Activated CD4-positive, alpha-beta T cell treated with anti-CD3 and anti-CD28 coated beads for 36 hours (primary cell): ENCODE measurements at regions of chr11 and their contacts with region 1.

Region 1: DNA sequence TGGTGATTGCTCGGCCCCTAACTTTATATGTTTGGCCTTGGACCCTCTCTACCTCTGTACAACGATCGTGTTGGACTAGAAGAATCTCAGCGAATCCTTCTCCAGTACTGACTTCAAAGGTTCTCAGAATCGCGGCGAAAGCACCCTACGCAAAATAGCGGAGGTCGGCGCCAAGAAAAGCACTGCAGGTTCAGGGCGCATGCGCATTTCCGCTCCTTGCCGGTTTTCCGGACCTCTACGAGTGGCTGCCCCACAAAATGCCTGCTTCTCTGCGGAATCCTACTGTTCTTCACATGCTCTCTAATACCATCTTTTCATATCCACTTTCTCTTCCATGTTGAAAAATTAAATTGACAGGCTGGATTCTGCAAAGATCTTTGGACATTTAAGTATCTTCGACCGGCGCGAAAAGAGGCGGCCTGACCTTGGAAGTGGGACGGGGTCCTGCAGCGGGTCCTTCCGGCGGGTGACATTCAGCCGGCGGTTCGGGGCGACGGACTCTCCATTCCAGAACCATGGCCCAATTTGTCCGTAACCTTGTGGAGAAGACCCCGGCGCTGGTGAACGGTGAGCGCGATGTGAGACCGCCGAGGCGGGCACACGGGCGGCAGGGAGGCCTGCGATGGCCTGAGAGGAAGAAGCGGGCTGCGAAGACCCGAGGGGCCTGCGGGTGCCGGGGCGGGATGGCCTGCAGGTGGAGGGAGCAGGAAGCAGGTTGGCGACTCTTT is at the start of gene ATP5MG:
- DNase-seq: peak; percentile 96
- ATAC-seq: peak; percentile 63
- H3K4me3 Mint-ChIP-seq: peak within 1 kb of the TSS; percentile 93
- H3K27ac Mint-ChIP-seq: peak within 1 kb of the TSS; percentile 100
- H3K4me1 Mint-ChIP-seq: peaks cover 64% of the 10 kb centered on the region
- H3K27me3 Mint-ChIP-seq: no peaks in the 10 kb centered on the region
- total RNA-seq, gene ATP5MG: 136 to 229 TPM

Region 2: DNA sequence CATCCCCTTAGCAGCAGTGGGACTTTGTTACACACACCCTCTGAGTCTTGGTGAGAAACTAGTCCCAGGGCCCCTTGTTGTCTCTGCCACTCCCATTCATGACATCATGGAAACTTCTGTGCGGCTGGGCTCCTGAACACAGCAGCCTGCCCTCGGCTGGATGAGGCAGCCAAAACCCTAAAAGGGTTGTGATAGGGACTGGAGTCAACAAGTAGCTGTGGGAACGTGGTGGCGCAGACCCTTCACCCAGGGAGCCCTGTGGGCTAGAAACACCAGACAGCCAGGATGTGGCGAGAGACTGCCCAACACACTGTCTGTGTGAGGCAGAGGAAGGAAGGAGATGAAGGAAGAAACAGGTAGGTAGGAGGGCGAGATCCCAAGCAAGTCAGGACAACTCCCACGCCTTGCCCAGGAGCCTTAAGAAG is 62.7 kb before region 1 on chr11:
- CTCF ChIA-PET with region 1: interaction called, 3 read pairs
- POLR2A ChIA-PET with region 1: interaction called, 3 read pairs
- intact Hi-C with region 1: loop called (anchors 2 kb)
- DNase-seq: peak; percentile 94
- ATAC-seq: peak; percentile 63
- H3K4me3 Mint-ChIP-seq: peak overlapping the region; percentile 83
- H3K27ac Mint-ChIP-seq: peak overlapping the region; percentile 100
- H3K4me1 Mint-ChIP-seq: peaks cover 45% of the 10 kb centered on the region
- H3K27me3 Mint-ChIP-seq: no peaks in the 10 kb centered on the region

Region 3: DNA sequence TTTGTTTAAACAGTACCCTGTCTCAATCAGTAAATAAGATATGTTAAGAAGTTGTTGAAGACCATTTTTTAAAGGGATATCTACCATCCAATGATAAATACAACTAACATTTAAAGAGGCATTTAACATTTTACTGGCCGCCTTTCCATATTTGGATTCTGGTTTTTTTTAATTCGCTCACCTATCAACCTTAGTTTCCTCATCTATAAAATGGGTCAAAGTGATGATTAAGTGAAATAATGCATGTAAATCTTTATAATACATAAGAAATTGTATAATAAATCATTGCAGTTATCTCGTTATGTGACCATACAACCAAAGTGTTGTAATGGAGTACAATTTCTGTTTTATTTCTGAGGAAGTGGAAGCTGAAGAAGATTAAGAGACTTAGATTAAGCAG is 17.7 kb before region 1 on chr11:
- CTCF ChIA-PET with region 1: interaction called, 14 read pairs
- POLR2A ChIA-PET with region 1: no interaction called
- intact Hi-C with region 1: no loop called
- DNase-seq: no peak
- ATAC-seq: no peak
- H3K4me3 Mint-ChIP-seq: no peak overlapping the region
- H3K27ac Mint-ChIP-seq: no peak overlapping the region
- H3K4me1 Mint-ChIP-seq: no peaks in the 10 kb centered on the region
- H3K27me3 Mint-ChIP-seq: no peaks in the 10 kb centered on the region

Region 4: GRCh38 chr11:118565051-118565450 is 163.7 kb after region 1 on chr11:
- CTCF ChIA-PET with region 1: interaction called, 3 read pairs
- POLR2A ChIA-PET with region 1: no interaction called
- intact Hi-C with region 1: loop called (anchors 1 to 5 kb)
- DNase-seq: no peak
- ATAC-seq: no peak
- H3K4me3 Mint-ChIP-seq: peak overlapping the region; percentile 90
- H3K27ac Mint-ChIP-seq: peak overlapping the region; percentile 76
- H3K4me1 Mint-ChIP-seq: peaks cover 16% of the 10 kb centered on the region
- H3K27me3 Mint-ChIP-seq: no peaks in the 10 kb centered on the region

Region 5: DNA sequence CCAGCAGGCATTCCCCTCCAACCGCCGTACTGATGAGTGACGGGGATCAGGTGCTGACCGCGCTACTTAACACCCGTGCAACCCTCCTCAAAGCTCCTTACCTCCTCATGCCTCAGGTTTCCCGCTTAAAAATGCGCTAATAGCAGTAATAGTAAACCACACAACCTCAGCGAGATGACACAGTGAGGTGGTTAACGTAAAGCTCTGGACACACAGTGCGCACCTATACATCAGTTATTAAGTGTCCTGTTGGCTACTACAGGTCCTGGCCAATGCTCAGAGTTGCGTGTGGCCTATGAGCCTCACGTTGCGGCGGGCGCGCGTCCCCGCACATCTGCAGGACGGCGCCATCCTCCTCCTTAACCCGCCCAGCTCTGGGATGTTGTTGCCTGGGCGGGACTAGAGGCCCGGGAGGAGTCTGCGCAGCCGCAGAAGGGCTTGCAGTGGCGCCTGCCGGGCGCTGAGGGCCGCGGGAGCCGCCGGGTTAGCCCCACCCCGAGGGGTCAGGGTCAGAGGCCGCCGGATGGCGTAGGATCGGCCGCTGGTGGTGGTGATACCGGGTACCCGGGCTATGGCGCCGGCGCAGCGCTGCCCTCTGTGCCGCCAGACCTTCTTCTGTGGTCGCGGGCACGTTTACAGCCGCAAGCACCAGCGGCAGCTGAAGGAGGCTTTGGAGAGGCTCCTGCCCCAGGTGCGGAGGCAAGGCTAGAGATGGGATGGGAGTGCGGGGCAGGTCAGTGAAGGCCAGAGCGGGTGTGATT is 596.5 kb after region 1 on chr11 and contains the start of gene CENATAC:
- CTCF ChIA-PET with region 1: no interaction called
- POLR2A ChIA-PET with region 1: no interaction called
- intact Hi-C with region 1: loop called in 1 of 2 experiments (anchors 2 kb)
- DNase-seq: peak; percentile 98
- ATAC-seq: peak; percentile 93
- H3K4me3 Mint-ChIP-seq: peak within 1 kb of the TSS; percentile 88
- H3K27ac Mint-ChIP-seq: peak within 1 kb of the TSS; percentile 98
- H3K4me1 Mint-ChIP-seq: peaks cover 32% of the 10 kb centered on the region
- H3K27me3 Mint-ChIP-seq: no peaks in the 10 kb centered on the region
- total RNA-seq, gene CENATAC: 23.7 to 26.2 TPM